ENCODE measurements at regions of chr4 and their contacts with region 1.

Region 1: DNA sequence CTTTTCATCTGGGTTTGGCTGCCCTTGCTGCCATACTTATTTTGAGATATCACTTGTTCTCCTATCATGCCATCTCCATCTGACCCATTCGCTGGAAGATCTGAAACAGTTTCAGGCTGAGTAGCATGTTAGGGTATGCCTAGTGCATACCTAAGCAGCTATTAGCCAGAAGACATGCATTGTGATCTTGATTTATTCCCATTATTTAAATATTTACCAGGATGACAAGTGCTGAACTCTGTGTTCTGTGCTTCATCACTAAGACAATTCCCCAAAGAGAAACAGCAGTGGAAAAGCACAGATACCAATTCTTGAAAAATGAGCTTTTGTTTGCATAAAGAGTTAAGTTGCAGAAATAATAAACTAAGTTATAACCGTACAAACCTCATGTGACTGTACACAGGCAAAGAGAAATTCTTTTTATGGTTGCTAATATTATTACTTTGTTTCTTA is 271.0 kb upstream of the ARSJ start:
- DNase-seq: no peak
- ATAC-seq: no peak
- H3K4me3 ChIP-seq: no peak overlapping the region
- H3K4me3 Mint-ChIP-seq: no peak overlapping the region
- H3K27ac ChIP-seq: no peak overlapping the region
- H3K27ac Mint-ChIP-seq: no peak overlapping the region
- H3K4me1 ChIP-seq: no peaks in the 10 kb centered on the region
- H3K4me1 Mint-ChIP-seq: no peaks in the 10 kb centered on the region
- H3K27me3 ChIP-seq: no peaks in the 10 kb centered on the region
- H3K27me3 Mint-ChIP-seq: no peaks in the 10 kb centered on the region
- CTCF ChIP-seq: no peak

Region 2: DNA sequence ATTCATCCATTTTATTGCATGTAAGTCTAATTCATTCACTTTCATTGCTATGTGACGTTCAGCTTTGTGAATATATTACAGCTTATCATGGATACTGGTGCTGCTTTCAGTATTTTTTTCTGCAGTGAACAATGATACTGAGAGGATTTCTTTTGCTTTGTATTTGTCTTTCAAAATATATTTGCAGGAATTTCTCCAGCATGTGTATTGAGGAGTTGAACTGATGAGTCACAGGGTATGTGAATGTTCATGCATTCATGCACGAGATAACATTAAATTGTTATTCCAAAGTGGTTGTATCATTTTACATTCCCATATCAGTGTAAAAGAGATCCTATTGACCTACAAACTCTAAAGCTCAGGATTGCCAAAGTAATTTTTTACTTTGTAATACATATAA is 12.8 kb after region 1 on chr4:
- intact Hi-C with region 1: loop called (anchors 1 kb)
- DNase-seq: no peak
- ATAC-seq: no peak
- H3K4me3 ChIP-seq: no peak overlapping the region
- H3K4me3 Mint-ChIP-seq: no peak overlapping the region
- H3K27ac ChIP-seq: no peak overlapping the region
- H3K27ac Mint-ChIP-seq: no peak overlapping the region
- H3K4me1 ChIP-seq: no peaks in the 10 kb centered on the region
- H3K4me1 Mint-ChIP-seq: no peaks in the 10 kb centered on the region
- H3K27me3 ChIP-seq: no peaks in the 10 kb centered on the region
- H3K27me3 Mint-ChIP-seq: no peaks in the 10 kb centered on the region
- CTCF ChIP-seq: no peak